ENCODE measurements at regions of chr12 and their contacts with region 1.

Region 1: GRCh38 chr12:120199595-120200306 is 1.2 kb downstream of the RPLP0 start:
- DNase-seq: peak; percentile 16
- H3K4me3 ChIP-seq: peak overlapping the region; percentile 75
- H3K27ac ChIP-seq: peak overlapping the region; percentile 75
- H3K27me3 ChIP-seq: no peaks in the 10 kb centered on the region
- CTCF ChIP-seq: no peak

Region 2: GRCh38 chr12:120181991-120182631 is 17.6 kb before region 1 on chr12:
- CTCF ChIA-PET with region 1: interaction called, 4 read pairs
- POLR2A ChIA-PET with region 1: interaction called, 26 read pairs
- DNase-seq: no peak
- H3K4me3 ChIP-seq: no peak overlapping the region
- H3K27ac ChIP-seq: no peak overlapping the region
- H3K27me3 ChIP-seq: no peaks in the 10 kb centered on the region
- CTCF ChIP-seq: no peak

Region 3: DNA sequence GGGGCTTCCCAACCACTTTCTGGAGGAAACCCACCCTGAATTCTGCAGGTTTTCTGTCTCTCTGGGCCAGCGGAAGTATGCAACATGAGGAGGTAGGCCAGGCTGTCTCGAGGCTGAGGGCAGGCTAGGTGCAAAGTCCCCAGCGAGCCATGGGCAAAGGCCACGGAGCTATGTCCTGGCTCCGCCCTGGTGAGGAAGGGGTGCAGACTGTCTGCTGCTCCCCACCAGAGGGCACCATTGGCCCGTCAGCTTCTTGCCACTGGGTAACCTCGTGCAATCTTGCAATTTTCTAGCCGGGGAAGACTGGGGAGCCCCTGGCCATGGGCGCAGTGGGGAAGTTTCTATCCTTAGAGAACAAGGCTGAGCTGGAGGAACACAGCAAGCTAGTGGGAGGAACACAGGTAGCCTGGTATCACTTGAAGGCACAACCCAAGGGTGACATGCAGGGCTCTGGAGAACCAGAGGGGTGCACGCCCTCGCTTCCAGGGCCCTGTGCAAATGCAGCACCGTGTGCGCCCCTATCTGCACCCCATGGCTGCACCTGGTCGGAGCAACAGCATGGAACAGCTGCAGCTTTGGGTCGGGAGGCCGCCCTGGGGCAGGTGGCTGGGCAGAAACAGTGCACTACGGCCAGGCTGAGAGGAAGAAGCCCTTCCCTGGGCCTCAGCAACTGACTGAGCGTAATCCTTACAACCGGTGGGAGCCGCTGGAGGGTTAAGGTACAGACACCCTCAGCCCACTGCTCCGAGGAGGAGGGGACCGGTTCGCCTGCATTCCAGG is 28.7 kb after region 1 on chr12:
- CTCF ChIA-PET with region 1: interaction called, 34 read pairs
- POLR2A ChIA-PET with region 1: interaction called, 136 read pairs
- DNase-seq: peak; percentile 61
- H3K4me3 ChIP-seq: no peak overlapping the region; the same call in 1 of the 2 replicates
- H3K27ac ChIP-seq: peak overlapping the region; percentile 99
- H3K27me3 ChIP-seq: no peaks in the 10 kb centered on the region
- CTCF ChIP-seq: peak; percentile 95

Region 4: DNA sequence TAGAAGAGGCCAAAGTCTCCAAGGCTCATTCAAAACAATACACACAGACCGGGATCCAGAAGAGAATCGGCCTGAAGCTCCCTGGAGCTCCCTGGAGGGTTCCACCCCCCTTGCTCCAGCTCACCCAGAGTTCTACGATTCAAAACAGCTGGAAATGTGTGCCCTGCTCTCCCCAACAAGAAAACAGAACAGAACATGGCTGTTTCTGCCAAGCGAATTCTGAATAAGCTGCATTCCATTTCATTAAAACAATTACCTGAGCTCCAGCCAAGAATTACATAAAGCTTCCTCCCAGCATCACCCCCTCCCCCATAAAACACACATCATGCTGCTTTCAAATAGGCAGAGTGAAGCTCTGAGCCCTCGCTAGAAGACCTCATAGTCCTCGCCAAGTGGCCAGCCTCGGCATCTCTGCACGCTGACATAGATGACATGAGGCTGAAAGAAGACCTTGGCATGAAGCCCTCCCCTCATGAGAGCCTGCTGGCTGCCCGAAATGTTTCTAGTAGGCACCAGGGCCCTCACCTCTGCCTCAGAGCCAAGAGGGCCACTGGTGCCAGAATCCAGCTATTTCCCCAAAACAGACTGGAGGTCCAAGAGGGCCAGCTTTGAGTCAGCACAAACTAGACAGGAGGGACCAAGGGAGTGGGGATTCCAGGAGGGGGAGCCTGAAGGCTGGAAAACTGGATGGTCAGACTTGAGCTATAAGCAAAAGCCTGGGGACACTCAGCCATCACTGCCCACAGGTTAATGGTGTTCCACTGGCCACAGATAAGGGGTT is 57.5 kb after region 1 on chr12:
- CTCF ChIA-PET with region 1: interaction called, 62 read pairs
- POLR2A ChIA-PET with region 1: interaction called, 38 read pairs
- DNase-seq: peak; percentile 84
- H3K4me3 ChIP-seq: peak overlapping the region; percentile 35
- H3K27ac ChIP-seq: peak overlapping the region; percentile 82
- H3K27me3 ChIP-seq: no peaks in the 10 kb centered on the region
- CTCF ChIP-seq: peak; percentile 4; the same call in 1 of the 2 replicates

Region 5: GRCh38 chr12:120286796-120287465 is 87.2 kb after region 1 on chr12:
- CTCF ChIA-PET with region 1: interaction called, 17 read pairs
- POLR2A ChIA-PET with region 1: interaction called, 149 read pairs
- DNase-seq: no peak
- H3K4me3 ChIP-seq: no peak overlapping the region
- H3K27ac ChIP-seq: no peak overlapping the region
- H3K27me3 ChIP-seq: no peaks in the 10 kb centered on the region
- CTCF ChIP-seq: no peak

Measured in AG04450 (cell line).